Activated naive CD4-positive, alpha-beta T cell treated with anti-CD3 and anti-CD28 coated beads for 36 hours (primary cell): ENCODE measurements at regions of chr1 and their contacts with region 1.

Region 1: GRCh38 chr1:150363426-150364230 is at the start of gene RPRD2:
- DNase-seq: peak; percentile 100
- H3K4me3 Mint-ChIP-seq: peak within 1 kb of the TSS; percentile 89
- H3K27ac Mint-ChIP-seq: peak within 1 kb of the TSS; percentile 98
- H3K4me1 Mint-ChIP-seq: peaks cover 17% of the 10 kb centered on the region
- H3K27me3 Mint-ChIP-seq: no peaks in the 10 kb centered on the region
- total RNA-seq, gene RPRD2: 20.9 to 22.9 TPM

Region 2: GRCh38 chr1:150009665-150010392 is 353.8 kb before region 1 on chr1:
- CTCF ChIA-PET with region 1: no interaction called
- intact Hi-C with region 1: loop called (anchors 10 kb)
- DNase-seq: peak; percentile 86
- H3K4me3 Mint-ChIP-seq: peak overlapping the region; percentile 92
- H3K27ac Mint-ChIP-seq: peak overlapping the region; percentile 96
- H3K4me1 Mint-ChIP-seq: peaks cover 43% of the 10 kb centered on the region
- H3K27me3 Mint-ChIP-seq: no peaks in the 10 kb centered on the region

Region 3: GRCh38 chr1:150293433-150294168 is 70.0 kb before region 1 on chr1 and contains the start of gene MRPS21:
- CTCF ChIA-PET with region 1: no interaction called
- intact Hi-C with region 1: loop called (anchors 2 kb)
- DNase-seq: peak; percentile 93
- H3K4me3 Mint-ChIP-seq: peak within 1 kb of the TSS; percentile 90
- H3K27ac Mint-ChIP-seq: peak within 1 kb of the TSS; percentile 91
- H3K4me1 Mint-ChIP-seq: peaks cover 40% of the 10 kb centered on the region
- H3K27me3 Mint-ChIP-seq: no peaks in the 10 kb centered on the region
- total RNA-seq, gene MRPS21: 80.3 to 83.8 TPM

Region 4: DNA sequence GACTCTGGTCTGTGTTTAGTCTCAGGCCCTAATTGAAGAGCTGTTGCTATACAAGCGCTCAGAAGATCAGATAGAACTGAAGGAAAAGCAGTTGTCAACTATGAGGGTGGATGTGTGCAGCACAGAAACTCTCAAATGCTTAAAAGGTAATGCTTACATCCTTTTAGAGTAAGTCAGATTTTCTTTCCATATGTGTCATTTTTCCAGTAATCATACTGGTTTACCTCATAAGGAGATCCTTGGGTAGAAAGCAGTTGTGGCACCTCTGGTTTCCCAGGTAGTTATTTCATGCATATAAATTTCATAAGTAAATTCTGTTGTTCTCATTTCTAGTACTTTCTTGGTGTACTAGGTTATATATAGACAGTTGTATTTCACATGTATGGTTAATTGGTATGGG is 80.6 kb after region 1 on chr1:
- CTCF ChIA-PET with region 1: no interaction called
- intact Hi-C with region 1: loop called (anchors 1 kb)
- DNase-seq: peak; percentile 32
- H3K4me3 Mint-ChIP-seq: no peak overlapping the region
- H3K27ac Mint-ChIP-seq: peak overlapping the region; percentile 87
- H3K4me1 Mint-ChIP-seq: peaks cover 13% of the 10 kb centered on the region
- H3K27me3 Mint-ChIP-seq: no peaks in the 10 kb centered on the region

Region 5: GRCh38 chr1:150696590-150697524 is 333.2 kb after region 1 on chr1 and contains the start of gene GOLPH3L:
- CTCF ChIA-PET with region 1: no interaction called
- intact Hi-C with region 1: loop called (anchors 5 kb)
- DNase-seq: peak; percentile 97
- H3K4me3 Mint-ChIP-seq: peak within 1 kb of the TSS; percentile 92
- H3K27ac Mint-ChIP-seq: peak within 1 kb of the TSS; percentile 82
- H3K4me1 Mint-ChIP-seq: peaks cover 23% of the 10 kb centered on the region
- H3K27me3 Mint-ChIP-seq: peaks cover 2% of the 10 kb centered on the region
- total RNA-seq, gene GOLPH3L: 17.1 to 18.2 TPM

Region 6: DNA sequence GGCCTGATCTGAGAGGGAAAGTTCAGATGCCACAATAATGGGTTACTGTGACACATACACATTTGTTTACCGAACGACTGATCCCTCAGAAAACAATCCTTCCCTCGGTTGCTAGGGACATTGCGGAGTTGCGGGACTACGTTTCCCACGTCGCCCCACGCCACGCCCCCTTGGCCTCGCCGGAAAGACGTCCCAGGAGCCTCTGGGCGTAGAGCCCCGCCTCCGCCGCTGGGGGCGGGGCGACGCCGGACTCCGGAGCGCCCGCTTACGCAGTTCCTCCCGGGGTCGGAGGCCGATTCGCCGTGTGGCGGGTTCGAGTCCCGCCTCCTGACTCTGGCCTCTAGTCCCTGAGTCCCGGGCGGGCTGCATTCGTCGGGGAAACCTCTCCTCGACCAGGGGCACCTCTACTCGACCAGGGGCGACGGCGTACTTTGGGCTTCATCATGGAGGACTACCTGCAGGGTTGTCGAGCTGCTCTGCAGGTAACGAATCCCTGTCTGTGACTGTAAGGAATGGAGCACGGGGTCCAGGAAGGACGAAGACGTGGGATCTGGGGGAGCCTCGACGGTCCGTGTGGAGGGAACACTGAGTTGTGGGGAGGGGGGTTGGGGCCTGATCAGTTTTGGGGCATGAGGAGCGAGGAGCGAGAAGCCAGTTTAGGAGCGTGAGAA is 644.7 kb after region 1 on chr1 and contains the start of gene PRUNE1:
- CTCF ChIA-PET with region 1: no interaction called
- intact Hi-C with region 1: loop called (anchors 10 kb)
- DNase-seq: peak; percentile 97
- H3K4me3 Mint-ChIP-seq: peak within 1 kb of the TSS; percentile 92
- H3K27ac Mint-ChIP-seq: peak within 1 kb of the TSS; percentile 99
- H3K4me1 Mint-ChIP-seq: peaks cover 56% of the 10 kb centered on the region
- H3K27me3 Mint-ChIP-seq: no peaks in the 10 kb centered on the region
- total RNA-seq, gene PRUNE1: 13.3 to 15.9 TPM